Activated CD4-positive, alpha-beta T cell treated with anti-CD3 and anti-CD28 coated beads for 36 hours (primary cell): ENCODE measurements at regions of chr22 and their contacts with region 1.

Region 1: GRCh38 chr22:27885977-27886842 is 32.8 kb downstream of the PITPNB start:
- DNase-seq: peak; percentile 57
- ATAC-seq: peak; percentile 33
- H3K4me3 Mint-ChIP-seq: no peak overlapping the region
- H3K27ac Mint-ChIP-seq: peak overlapping the region; percentile 10
- H3K4me1 Mint-ChIP-seq: no peaks in the 10 kb centered on the region
- H3K27me3 Mint-ChIP-seq: no peaks in the 10 kb centered on the region

Region 2: DNA sequence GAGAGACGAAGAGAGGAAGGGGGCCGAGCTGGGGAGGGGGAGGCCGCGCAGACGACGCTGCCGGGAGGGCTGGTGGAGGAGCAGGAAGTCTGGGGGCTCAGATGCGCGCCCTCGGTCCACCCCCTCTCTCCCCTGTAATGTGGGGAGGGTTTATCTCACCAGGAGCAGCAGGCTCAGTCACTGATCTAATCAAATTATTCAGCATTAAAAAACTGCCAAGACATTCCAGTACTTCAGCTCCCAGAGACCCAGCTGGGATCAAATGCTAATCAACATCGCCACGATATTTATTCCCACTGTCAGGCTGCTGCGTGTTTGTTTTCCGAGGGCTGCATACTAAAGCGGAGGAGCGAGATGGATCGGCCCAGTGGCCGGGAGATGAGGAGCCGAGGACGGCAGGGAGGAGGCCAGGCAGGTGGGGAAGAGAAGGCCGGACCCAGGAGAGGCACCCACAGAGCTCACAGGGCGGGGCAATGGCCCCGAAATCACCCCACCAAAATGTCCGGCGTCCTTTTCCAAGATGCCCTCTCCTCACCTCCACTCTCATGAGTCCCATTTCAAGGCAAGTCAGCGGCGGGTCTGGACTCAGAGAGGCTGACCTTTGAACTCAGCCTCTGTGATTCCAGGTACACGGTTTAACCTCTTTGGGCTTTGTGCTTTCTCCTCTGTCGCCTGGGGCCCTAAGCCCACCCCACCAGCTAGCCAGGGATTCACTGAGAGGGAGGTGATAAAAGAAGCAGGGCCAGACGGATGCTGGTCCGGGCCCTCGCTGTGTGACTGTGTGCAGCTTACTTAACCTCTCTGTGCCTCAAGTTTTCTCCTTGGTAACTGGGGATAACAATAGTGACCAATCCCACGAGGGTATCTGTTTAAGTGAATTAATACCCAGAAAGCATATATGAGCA is 586.8 kb before region 1 on chr22:
- CTCF ChIA-PET with region 1: no interaction called
- POLR2A ChIA-PET with region 1: no interaction called
- intact Hi-C with region 1: no loop called
- DNase-seq: no peak
- ATAC-seq: no peak
- H3K4me3 Mint-ChIP-seq: no peak overlapping the region
- H3K27ac Mint-ChIP-seq: no peak overlapping the region
- H3K4me1 Mint-ChIP-seq: no peaks in the 10 kb centered on the region
- H3K27me3 Mint-ChIP-seq: peaks cover 39% of the 10 kb centered on the region

Region 3: DNA sequence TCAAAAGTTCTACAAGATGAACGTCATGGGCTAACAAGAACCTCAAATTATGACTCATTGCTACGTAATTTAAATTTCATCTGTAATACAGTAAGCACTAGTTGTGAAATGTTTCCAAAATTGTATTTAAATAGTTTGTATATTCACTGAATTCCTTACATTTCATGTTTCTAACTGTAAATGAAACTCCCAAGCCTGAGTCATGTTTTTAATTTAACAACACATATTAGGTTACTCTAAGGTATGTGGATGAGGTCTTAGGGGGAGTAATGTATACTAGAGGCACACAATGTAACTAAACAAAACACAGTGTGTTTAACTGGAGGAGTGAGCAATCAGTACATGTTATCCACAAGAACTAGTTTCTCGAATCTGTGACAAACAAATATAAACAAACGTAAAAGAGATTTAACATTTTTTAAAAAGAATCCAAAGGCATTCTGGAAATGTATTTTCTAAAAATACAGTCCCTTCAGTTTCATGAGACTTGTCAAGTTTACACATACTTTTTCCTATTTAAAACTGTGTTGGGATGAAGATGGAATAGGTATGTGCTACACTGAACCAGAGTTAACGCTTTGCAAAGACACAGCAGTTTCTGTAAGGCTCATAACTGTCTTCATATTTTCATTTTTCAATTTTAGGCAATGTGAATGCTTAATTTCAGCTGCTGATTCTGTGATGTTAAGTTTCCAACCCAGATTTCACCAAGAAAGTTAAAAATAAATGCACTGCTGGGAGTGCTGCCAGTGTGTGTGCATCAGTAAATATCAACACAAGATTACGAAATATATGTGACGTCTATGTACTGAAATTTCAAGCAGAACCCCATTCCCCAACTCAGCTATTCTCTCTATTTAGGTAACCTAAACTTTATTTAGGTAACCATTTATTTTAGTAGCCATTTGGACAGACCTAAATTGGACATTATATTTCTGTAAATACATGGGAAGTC is 19.8 kb before region 1 on chr22:
- CTCF ChIA-PET with region 1: interaction called, 13 read pairs
- POLR2A ChIA-PET with region 1: no interaction called
- intact Hi-C with region 1: no loop called
- DNase-seq: no peak
- ATAC-seq: no peak
- H3K4me3 Mint-ChIP-seq: no peak overlapping the region
- H3K27ac Mint-ChIP-seq: peak overlapping the region; percentile 74
- H3K4me1 Mint-ChIP-seq: peaks cover 44% of the 10 kb centered on the region
- H3K27me3 Mint-ChIP-seq: no peaks in the 10 kb centered on the region

Region 4: DNA sequence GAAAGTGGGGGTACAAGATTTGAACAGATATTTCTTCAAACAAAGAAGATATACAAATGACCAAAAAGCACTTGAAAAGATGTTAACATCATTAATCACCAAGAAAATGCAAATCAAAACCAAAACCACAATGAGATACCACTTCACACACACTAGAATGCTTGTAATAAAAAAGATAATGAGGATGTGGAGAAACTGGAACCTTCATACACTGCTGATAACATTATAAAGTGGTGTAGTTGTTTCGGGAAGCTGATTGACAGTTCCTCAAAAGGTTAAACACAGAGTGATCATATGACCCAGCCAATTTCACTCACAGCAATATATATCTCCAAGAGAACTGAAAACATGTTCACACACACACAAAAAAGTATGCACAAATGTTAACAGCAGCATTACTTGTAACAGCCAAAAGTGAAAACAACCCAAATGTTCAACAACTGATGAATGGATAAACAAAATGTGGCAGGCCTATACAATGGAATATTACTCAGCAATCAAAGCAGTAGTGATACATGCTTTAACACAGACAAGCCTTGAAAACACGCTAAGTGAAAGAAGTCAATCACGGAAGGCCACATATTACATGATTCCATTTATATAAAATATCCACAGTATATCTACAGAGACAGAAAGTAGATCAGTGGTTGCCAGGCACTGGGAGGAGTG is 17.7 kb after region 1 on chr22:
- CTCF ChIA-PET with region 1: interaction called, 11 read pairs
- POLR2A ChIA-PET with region 1: no interaction called
- intact Hi-C with region 1: no loop called
- DNase-seq: no peak
- ATAC-seq: peak; percentile 89
- H3K4me3 Mint-ChIP-seq: no peak overlapping the region
- H3K27ac Mint-ChIP-seq: peak overlapping the region; percentile 45
- H3K4me1 Mint-ChIP-seq: peaks cover 57% of the 10 kb centered on the region
- H3K27me3 Mint-ChIP-seq: no peaks in the 10 kb centered on the region

Region 5: GRCh38 chr22:28009272-28009827 is 123.1 kb after region 1 on chr22:
- CTCF ChIA-PET with region 1: interaction called, 19 read pairs
- POLR2A ChIA-PET with region 1: interaction called, 4 read pairs
- intact Hi-C with region 1: loop called (anchors 1 kb)
- DNase-seq: peak; percentile 88
- ATAC-seq: peak; percentile 85
- H3K4me3 Mint-ChIP-seq: no peak overlapping the region
- H3K27ac Mint-ChIP-seq: no peak overlapping the region
- H3K4me1 Mint-ChIP-seq: no peaks in the 10 kb centered on the region
- H3K27me3 Mint-ChIP-seq: no peaks in the 10 kb centered on the region

Region 6: DNA sequence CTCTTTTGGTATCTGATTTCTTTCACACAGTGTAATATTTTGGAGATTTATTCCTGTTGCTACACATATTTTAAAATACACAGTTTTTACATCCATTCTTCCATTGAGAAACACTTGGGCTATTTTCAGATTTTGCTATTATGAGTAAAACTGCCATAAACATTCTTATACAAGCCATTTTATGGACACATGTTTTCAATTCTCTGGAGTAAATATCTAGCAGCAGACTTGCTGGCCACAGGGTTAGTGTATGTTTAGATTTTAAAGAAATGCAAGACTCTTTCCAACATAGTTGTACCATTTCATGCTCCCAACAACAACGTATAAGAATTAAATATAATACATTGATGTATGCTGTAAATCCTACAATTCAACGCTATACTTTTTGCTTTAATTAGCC is 393.7 kb after region 1 on chr22:
- CTCF ChIA-PET with region 1: interaction called, 12 read pairs
- POLR2A ChIA-PET with region 1: no interaction called
- intact Hi-C with region 1: no loop called
- DNase-seq: no peak
- ATAC-seq: no peak
- H3K4me3 Mint-ChIP-seq: no peak overlapping the region
- H3K27ac Mint-ChIP-seq: no peak overlapping the region
- H3K4me1 Mint-ChIP-seq: no peaks in the 10 kb centered on the region
- H3K27me3 Mint-ChIP-seq: peaks cover 2% of the 10 kb centered on the region